ENCODE measurements at regions of chr3 and their contacts with region 1.

Region 1: GRCh38 chr3:185912929-185913901 is 24.6 kb downstream of the TRA2B start:
- DNase-seq: no peak
- ATAC-seq: peak; percentile 10
- H3K4me3 Mint-ChIP-seq: no peak overlapping the region
- H3K27ac Mint-ChIP-seq: peak overlapping the region; percentile 40
- H3K4me1 Mint-ChIP-seq: peaks cover 2% of the 10 kb centered on the region
- H3K27me3 Mint-ChIP-seq: no peaks in the 10 kb centered on the region
- CTCF ChIP-seq: no peak

Region 2: GRCh38 chr3:185862920-185863319 is 50.3 kb before region 1 on chr3:
- CTCF ChIA-PET with region 1: no interaction called
- POLR2A ChIA-PET with region 1: no interaction called
- intact Hi-C with region 1: no loop called
- DNase-seq: no peak
- ATAC-seq: no peak
- H3K4me3 Mint-ChIP-seq: no peak overlapping the region
- H3K27ac Mint-ChIP-seq: no peak overlapping the region
- H3K4me1 Mint-ChIP-seq: no peaks in the 10 kb centered on the region
- H3K27me3 Mint-ChIP-seq: no peaks in the 10 kb centered on the region
- CTCF ChIP-seq: no peak

Region 3: GRCh38 chr3:185900226-185900625 is 13.0 kb before region 1 on chr3:
- CTCF ChIA-PET with region 1: interaction called, 3 read pairs
- POLR2A ChIA-PET with region 1: interaction called, 16 read pairs
- intact Hi-C with region 1: no loop called
- DNase-seq: no peak
- ATAC-seq: no peak
- H3K4me3 Mint-ChIP-seq: no peak overlapping the region
- H3K27ac Mint-ChIP-seq: no peak overlapping the region
- H3K4me1 Mint-ChIP-seq: no peaks in the 10 kb centered on the region
- H3K27me3 Mint-ChIP-seq: peaks cover 1% of the 10 kb centered on the region
- CTCF ChIP-seq: no peak

Region 4: DNA sequence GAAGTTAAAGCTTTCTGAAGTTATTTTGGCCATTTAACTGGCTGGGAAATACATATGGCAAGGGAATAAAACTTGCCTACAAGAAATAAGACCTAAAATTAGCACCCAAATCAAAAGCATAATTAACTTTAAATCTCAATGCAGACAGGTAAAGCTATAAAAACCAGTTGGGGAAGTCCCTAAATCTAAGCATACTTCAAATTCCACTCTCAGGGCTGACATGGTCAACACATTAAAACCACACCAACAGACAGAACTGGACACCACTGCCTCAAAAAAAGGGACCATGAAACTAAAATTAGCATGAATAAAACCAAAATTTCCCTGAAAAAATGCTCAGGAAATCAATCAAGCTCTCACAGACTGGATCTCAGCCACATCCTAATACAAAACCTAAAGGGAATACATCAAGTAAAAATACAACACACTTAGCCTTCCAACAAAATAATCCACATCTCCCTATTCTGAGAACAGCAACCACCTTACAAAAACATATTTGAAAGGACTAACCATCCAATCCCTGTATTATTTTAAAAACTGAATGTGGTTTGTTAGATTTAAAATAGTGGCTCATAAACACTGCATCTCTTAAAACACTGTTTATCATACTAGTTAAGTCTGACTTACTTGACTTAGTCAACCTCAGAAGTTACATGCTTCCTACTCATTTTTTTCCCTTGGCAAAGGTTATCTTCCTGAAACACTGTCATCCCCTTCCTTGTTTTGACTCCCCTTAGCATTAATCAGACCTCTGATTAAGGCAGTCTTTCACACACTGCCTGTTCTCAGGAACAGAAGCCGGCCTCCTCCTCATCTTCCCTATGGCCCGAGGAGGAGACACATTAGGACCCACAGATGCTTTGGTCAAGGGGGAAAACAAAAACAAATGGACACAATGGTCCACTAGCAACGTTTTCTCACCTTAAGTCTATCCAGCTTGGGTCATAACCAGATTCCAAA is 16.3 kb after region 1 on chr3:
- CTCF ChIA-PET with region 1: interaction called, 4 read pairs
- POLR2A ChIA-PET with region 1: interaction called, 115 read pairs
- intact Hi-C with region 1: no loop called
- DNase-seq: no peak
- ATAC-seq: no peak
- H3K4me3 Mint-ChIP-seq: peak overlapping the region; percentile 100
- H3K27ac Mint-ChIP-seq: peak overlapping the region; percentile 66
- H3K4me1 Mint-ChIP-seq: peaks cover 85% of the 10 kb centered on the region
- H3K27me3 Mint-ChIP-seq: no peaks in the 10 kb centered on the region
- CTCF ChIP-seq: no peak

Measured in activated CD8-positive, alpha-beta T cell treated with anti-CD3 and anti-CD28 coated beads for 36 hours (primary cell).